ENCODE measurements at regions of chr17 and their contacts with region 1.

Region 1: GRCh38 chr17:19664136-19664820 is 15.7 kb downstream of the ALDH3A2 start:
- DNase-seq: peak in 4 of 5 donors; percentile 54 to 86 (median 72)
- ATAC-seq: peak; percentile 93 to 96 (median 94)
- H3K4me3 ChIP-seq: no peak overlapping the region
- H3K27ac ChIP-seq: peak overlapping the region in 6 of 12 donors; percentile 30 to 67 (median 48)
- H3K4me1 ChIP-seq: peaks cover 0 to 21% (median 6%) of the 10 kb centered on the region in 12 donors
- H3K27me3 ChIP-seq: no peaks in the 10 kb centered on the region
- CTCF ChIP-seq: no peak
- POLR2A ChIP-seq: no peak

Region 2: GRCh38 chr17:19728079-19728495 is 63.8 kb after region 1 on chr17:
- intact Hi-C with region 1: loop called in 1 of 10 experiments (anchors 10 kb)
- DNase-seq: peak; percentile 79 to 95 (median 88)
- ATAC-seq: peak; percentile 77 to 85 (median 80)
- H3K4me3 ChIP-seq: no peak overlapping the region
- H3K27ac ChIP-seq: peak overlapping the region; percentile 83 to 95 (median 91)
- H3K4me1 ChIP-seq: peaks cover 0 to 51% (median 25%) of the 10 kb centered on the region in 12 donors
- H3K27me3 ChIP-seq: no peaks in the 10 kb centered on the region
- CTCF ChIP-seq: no peak
- POLR2A ChIP-seq: no peak

Region 3: DNA sequence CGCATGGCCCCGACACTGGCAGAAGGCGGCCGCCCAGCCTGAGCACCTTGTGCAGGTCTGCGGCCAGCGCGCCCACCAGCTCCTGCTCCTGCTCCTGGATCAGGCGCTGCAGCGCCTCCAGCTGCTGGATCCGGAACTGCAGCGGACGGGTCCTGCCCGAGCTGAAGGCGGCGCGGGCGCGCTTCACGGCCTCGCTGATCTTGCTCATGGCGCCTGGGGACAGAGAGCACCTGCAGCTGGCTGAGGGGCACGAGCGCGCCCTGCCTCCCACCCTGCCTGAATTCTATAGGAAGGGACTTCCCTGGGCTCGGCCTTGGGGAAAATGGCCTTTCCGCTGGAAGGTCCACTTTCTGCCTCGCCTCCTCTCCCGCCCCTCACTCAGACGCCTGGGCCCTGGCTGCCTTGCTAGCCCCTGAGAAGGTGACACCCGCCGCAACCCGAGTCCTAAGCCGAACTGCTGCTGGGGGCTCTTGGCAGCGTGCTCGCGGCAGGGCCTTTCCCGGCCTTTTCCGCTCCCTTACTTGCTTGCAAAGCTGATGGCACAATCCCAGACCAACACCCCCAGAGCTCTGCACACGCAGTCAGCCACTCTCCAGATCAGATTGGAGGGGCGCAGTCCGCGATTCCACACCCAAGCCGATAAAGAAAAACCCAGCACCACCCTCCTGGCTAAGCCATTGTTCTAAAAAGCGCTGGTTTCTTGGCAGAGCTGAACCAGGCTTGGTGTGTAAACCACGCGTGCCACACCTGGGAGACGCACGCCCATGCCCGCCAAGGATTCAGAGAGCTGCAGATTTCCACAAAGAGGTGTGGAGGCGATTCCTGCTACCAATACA is 80.9 kb after region 1 on chr17:
- intact Hi-C with region 1: loop called in 1 of 10 experiments (anchors 10 kb)
- DNase-seq: peak; percentile 85 to 94 (median 91)
- ATAC-seq: peak; percentile 63 to 95 (median 86)
- H3K4me3 ChIP-seq: peak overlapping the region; percentile 28 to 65 (median 60)
- H3K27ac ChIP-seq: peak overlapping the region in 6 of 12 donors; percentile 32 to 64 (median 59)
- H3K4me1 ChIP-seq: peaks cover 0 to 13% (median 5%) of the 10 kb centered on the region in 12 donors
- H3K27me3 ChIP-seq: no peaks in the 10 kb centered on the region
- CTCF ChIP-seq: peak; percentile 85 to 96 (median 92)
- POLR2A ChIP-seq: no peak